ENCODE measurements at regions of chr1 and their contacts with region 1.

Region 1: DNA sequence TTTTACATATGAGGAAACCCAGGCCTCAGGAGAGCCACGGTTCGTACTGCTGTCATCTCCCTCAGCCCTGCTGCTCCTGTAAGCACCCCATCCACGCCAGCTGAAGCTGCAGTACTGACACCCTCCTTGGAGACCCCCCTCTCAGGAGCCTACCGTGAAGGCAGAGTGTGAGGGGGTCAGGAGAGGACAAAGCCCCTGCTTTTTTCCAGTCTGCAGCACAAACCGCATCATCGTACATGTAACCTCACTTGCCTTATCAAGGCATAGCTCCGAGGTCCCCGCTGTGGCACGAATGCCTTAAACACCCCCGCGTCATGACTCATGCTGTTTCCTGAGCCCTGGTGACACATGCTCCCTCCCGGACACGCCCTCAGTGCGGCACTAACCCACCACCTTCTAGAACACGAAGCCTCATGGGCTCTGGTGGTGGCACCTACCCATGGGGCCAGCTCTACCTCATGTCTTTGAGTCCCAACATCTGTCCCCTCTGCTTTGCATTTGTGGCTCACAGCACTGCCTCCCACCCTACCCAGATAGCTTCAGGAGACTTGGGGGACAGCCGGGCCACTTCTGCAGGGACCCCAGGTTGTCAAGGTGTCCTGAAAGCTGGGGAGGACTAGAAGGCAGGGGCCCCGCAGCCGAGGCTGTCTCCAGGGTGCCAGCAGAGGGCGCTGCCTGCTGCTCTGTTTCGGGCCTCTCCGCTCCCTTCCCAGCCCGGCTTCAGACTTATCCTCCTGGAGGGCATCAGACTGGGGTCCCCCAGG is 4.9 kb downstream of the SH3BGRL3 start:
- DNase-seq: peak; percentile 79

Region 2: GRCh38 chr1:26218906-26219494 is 65.8 kb before region 1 on chr1:
- CTCF ChIA-PET with region 1: no interaction called
- POLR2A ChIA-PET with region 1: no interaction called
- DNase-seq: no peak

Region 3: DNA sequence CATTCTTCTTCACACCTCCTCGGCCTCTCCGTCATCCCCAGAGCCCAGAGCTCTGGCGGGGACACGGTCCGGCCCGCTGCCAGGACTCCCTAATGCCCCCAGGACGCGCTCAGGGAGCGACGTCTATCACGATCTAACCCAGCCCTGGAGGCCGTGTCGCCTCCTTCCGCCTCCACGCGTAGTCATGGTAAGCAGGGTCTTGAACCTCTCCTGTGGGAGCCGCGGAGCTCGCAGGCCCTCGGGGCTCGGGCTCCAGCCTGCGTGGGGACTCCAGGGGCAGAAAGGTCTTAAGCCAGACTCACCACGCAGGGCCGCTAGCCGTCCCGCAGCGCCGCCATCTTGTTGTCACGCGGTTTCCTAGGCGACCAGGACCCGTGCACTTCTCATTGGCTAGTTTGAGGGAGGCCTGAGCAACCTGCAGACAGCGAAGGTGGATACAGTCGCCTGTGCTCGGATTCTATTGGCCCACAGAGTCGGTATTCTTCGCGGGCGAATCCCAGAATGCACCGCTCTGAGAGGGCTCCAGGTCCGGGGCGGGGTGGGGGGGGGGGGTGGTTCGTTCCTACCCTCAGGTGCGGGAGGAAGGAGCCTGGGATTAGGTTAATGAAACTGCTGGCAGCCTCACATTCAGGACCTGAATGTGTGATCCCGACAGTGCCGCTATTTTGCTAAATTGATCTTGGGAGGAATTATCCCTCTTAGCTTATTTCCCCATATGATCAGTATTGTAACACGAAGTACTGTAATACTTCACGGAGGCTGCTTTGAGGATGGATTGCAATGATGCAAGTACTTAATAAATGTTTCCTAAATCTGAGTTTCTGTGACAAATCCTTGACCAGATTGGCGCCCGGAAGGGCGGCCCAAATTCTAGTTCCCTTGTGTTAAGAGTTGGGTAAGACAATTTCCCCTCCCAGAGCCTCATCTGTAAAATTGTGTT is 21.8 kb after region 1 on chr1 and contains the start of gene UBXN11:
- CTCF ChIA-PET with region 1: interaction called, 15 read pairs
- POLR2A ChIA-PET with region 1: interaction called, 5 read pairs
- DNase-seq: peak; percentile 98

Region 4: DNA sequence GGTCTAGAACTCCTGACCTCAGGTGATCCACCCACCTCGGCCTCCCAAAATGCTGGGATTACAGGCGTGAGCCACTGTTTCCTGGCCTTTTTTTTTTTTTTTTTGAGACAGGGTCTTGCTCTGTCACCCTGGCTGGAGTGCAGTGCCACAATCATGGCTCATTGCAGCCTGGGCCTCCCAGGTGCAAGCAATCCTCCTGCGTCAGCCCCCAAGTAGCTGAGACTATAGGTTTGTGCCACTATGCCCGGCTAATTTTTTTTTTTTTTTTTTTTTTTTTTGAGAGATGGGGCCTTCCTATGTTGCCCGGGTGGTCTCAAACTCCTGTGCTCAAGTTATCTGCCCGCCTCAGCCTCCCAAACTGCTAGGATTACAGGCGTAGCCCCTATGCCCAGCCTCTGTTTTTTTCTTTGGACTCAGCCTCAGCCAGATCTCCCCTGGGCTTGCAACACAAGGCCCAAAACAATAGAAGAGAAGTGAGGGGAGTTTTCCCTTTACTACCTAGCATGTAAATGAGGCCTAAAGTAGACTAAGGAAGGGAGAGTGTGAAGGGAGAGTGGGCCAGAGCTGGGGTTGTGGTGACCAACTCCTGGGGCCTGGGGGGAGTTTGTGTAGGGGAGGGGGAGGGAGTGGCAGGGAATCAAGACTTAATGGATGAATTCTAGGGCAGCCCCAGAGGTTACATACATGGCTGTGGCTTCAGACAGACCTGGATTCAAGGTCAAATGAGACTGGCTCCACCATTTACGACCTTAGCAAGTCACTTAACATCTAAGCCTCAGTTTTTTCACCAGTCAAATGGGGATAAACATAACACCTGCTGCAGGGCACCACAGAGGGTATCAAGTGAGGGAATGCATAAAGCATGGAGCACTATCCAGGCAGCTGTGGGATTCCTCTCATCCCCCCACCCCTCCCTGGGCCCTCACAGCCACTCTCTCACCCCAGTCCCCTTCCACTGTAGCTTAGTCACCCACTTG is 31.4 kb after region 1 on chr1:
- CTCF ChIA-PET with region 1: interaction called, 55 read pairs
- POLR2A ChIA-PET with region 1: interaction called, 3 read pairs
- DNase-seq: no peak

Region 5: GRCh38 chr1:26321315-26322041 is 36.7 kb after region 1 on chr1:
- CTCF ChIA-PET with region 1: interaction called, 55 read pairs
- POLR2A ChIA-PET with region 1: no interaction called
- DNase-seq: peak; percentile 89

Region 6: DNA sequence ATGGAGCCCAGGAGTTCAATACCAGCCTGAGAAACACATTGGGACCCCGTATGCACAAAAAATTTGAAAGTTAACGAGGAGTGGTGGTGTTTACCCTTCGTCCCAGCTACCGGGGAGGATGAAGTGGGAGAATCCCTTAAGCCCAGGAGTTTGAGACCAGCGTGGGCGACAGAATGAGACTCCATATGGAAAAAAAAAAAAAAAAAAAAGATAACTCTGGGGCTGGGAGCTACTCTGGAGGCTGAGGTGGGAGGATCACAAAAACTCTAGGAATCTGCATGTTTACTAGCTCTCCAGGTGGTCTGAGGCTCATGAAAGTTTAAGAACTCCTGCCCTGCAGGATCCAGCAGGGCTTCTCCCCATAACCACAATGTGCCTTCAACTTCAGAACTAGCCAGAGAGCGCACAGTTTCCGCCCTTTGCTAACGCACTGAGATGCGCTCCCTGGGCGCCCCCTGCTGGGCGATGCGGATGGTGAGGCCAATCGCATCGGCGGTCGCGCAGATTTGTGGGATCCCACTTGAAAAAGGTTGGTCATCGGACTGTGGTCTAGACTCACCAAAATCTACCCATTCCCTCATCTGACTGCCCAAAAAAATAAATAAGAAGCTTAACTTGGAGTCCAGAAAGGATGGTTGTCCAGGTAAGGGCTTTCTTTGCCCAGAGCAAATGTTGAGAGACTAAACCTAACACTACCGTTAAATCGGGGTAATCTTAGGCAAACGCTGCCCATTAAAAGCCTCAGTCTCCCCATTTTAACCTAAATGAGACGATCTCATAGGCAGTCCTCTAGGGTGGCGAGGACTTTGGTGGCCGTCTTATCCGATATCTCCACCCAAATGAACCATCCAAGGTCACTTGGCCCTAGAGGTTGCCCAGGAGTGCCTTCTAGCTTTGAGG is 79.0 kb after region 1 on chr1:
- CTCF ChIA-PET with region 1: interaction called, 11 read pairs
- POLR2A ChIA-PET with region 1: no interaction called
- DNase-seq: peak; percentile 83

Region 7: DNA sequence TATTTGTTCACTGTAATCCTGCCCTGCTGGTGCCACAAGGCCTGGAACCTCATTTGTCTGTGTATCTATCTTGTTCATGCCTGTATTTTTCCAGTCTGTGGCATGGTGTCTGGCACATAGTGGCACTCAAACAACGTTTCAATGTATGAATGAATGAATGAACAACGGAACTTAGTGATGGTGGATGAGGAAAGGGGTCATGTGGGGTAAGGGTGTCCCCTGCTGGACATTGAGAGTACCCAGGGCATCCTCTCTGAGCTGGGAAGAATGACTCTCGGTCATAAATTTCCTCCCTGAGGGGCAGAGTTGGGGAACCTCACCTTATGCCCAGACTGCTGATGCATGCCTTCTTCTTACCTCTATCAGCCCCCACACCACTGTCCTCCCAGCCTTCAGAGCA is 106.7 kb after region 1 on chr1:
- CTCF ChIA-PET with region 1: interaction called, 19 read pairs
- POLR2A ChIA-PET with region 1: no interaction called
- DNase-seq: peak; percentile 42

Region 8: GRCh38 chr1:26417111-26417759 is 132.5 kb after region 1 on chr1:
- CTCF ChIA-PET with region 1: interaction called, 27 read pairs
- POLR2A ChIA-PET with region 1: no interaction called
- DNase-seq: peak; percentile 80

Measured in HEK293T (cell line).